ENCODE measurements at regions of chr1 and their contacts with region 1.

Region 1: DNA sequence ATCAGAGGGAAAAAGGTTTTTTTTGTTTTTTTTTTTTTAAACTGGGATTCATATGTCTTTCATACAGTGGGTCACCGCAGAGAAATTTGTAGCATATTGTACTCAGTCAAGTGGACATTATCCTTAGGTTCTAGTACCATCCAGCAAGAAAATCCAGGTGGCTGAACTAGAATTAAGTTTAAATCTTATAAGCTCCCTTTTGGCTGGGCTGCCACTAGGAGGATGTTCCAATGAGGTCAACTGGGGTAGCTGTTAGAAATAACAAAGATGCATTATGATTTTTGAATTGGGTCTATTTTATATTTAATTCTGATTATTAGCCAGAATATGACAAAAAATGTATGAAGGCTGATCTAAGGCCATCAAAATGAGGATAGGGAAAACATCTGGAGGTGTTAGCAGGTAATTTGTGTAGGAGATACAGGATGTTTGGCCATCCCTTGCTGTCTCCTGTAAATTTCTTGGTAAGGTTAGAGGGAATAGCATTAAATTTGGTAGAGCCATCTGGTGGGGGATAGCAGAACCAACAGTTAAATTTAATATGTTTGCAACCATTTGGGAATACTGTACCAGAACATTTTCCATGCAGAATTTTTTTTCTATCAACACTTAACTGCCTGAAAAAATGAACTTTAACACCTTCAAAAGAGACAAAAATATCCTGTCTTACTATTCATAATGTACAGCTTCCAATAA is 568.5 kb upstream of the B3GALT2 start:
- DNase-seq: peak; percentile 2
- ATAC-seq: peak; percentile 77
- H3K4me3 ChIP-seq: no peak overlapping the region
- H3K27ac ChIP-seq: no peak overlapping the region
- H3K4me1 ChIP-seq: no peaks in the 10 kb centered on the region
- H3K27me3 ChIP-seq: no peaks in the 10 kb centered on the region
- CTCF ChIP-seq: peak; percentile 33 to 35 (median 35); a peak in 5 of 6 replicates
- POLR2A ChIP-seq: no peak
- RAD21 ChIP-seq: peak; percentile 47; the same call in 1 of the 2 replicates

Region 2: DNA sequence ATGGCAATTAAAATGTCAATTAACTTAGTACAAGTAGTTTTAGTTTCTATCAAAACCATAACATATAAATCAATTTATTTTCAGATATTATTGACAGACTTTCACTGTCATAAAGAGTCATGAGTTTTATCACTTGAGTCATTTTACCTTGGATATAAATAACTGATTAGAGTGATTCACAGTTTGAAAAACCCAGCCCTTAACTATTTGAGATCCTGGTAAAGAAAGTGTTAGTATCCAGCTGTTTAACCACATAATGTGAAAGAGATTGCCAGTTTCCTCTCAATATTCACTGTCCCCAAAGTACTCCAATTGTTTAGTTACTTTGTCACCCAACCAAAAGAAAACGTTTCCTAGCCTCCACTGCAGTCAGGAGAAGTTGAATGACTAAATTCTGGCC is 787.0 kb before region 1 on chr1:
- CTCF ChIA-PET with region 1: no interaction called
- POLR2A ChIA-PET with region 1: no interaction called
- RAD21 ChIA-PET with region 1: no interaction called
- intact Hi-C with region 1: no loop called
- DNase-seq: no peak
- ATAC-seq: 0 out of 2 replicates have a peak, but pooled peaks have one; percentile 11
- H3K4me3 ChIP-seq: no peak overlapping the region
- H3K27ac ChIP-seq: peak overlapping the region; percentile 37; the same call in 1 of the 2 replicates
- H3K4me1 ChIP-seq: peaks cover 22 to 50% of the 10 kb centered on the region in 2 experiments
- H3K27me3 ChIP-seq: no peaks in the 10 kb centered on the region
- CTCF ChIP-seq: no peak
- POLR2A ChIP-seq: no peak
- RAD21 ChIP-seq: no peak

Region 3: DNA sequence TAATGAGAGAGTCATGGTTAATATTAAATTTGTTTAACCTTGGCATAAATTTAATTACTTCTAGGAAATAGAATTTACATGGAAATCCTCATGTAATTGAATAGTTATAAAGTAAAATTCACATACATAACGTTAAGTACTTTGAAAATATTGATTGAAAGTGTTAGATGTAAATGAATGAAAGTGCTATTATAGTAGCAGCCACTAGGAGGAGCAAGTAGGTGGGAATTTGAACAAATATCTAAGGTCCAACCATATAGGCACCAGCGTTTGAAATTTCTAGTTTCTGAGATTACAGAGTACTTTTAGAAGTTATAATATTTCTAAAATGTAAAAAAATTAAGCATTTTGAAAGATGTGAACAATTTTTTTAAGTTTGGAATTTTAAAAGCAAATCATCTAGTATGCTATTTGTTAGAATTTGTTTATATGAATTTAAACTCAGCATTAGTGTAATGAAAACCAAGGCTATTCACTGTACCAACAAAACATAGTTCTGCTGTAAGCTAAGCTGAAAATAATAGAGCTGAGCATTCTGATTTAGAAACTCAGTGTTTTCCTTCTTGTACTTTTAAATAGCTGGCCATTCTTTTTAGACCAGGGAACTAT is 571.8 kb before region 1 on chr1:
- CTCF ChIA-PET with region 1: no interaction called
- POLR2A ChIA-PET with region 1: no interaction called
- RAD21 ChIA-PET with region 1: no interaction called
- intact Hi-C with region 1: loop called (anchors 10 kb)
- DNase-seq: peak; percentile 51
- ATAC-seq: peak; percentile 72
- H3K4me3 ChIP-seq: no peak overlapping the region
- H3K27ac ChIP-seq: no peak overlapping the region
- H3K4me1 ChIP-seq: no peaks in the 10 kb centered on the region
- H3K27me3 ChIP-seq: no peaks in the 10 kb centered on the region
- CTCF ChIP-seq: peak; percentile 54 to 87 (median 78)
- POLR2A ChIP-seq: no peak
- RAD21 ChIP-seq: peak; percentile 71

Region 4: DNA sequence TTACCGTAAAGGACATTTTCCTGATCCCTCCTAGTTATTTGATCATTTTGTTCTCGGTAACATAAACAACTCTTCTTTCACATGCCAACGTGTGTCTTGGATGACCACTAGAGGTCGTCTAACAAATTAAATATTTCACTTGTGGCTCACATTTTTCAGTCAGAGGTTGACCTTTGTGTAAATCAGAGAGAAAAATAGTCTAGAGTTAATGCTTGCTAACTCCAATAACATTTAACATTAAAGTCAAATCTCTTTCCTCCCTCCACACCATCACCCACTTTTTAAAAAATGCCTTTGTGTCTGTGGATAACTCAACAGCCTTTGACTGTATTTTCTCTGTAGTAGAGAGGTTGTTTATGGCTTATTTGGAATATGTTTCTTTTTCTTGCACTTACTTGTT is 348.0 kb before region 1 on chr1:
- CTCF ChIA-PET with region 1: no interaction called
- POLR2A ChIA-PET with region 1: no interaction called
- RAD21 ChIA-PET with region 1: no interaction called
- intact Hi-C with region 1: loop called (anchors 2 kb)
- DNase-seq: peak; percentile 19
- ATAC-seq: peak; percentile 74
- H3K4me3 ChIP-seq: no peak overlapping the region
- H3K27ac ChIP-seq: no peak overlapping the region
- H3K4me1 ChIP-seq: no peaks in the 10 kb centered on the region
- H3K27me3 ChIP-seq: no peaks in the 10 kb centered on the region
- CTCF ChIP-seq: peak; percentile 47 to 77 (median 65); a peak in 5 of 6 replicates
- POLR2A ChIP-seq: no peak
- RAD21 ChIP-seq: peak; percentile 65